Activated CD4-positive, alpha-beta memory T cell treated with anti-CD3 and anti-CD28 coated beads for 36 hours (primary cell): ENCODE measurements at regions of chr1 and their contacts with region 1.

Region 1: DNA sequence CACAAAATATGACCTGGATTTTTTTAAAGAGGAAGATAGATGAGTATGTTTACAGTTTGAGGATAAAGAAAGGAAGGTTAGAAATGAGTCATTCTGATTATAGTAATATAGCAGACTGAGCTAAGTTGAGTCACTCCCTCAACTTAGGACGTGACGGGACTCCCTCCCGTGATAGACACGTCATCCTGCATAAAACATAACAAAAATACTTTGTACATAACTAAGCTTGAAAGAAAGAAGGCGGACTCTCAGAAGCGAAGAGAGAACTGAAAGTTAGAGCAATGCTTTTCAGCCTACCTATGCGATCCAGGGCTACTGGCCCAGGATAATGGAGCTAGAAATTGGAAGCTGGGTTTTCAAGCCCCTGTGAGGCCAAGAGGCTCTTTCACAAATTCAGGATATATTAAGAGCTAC is 53.0 kb upstream of the DESI2 start:
- DNase-seq: peak; percentile 76
- H3K4me3 Mint-ChIP-seq: peak overlapping the region; percentile 70
- H3K27ac Mint-ChIP-seq: peak overlapping the region; percentile 88
- H3K4me1 Mint-ChIP-seq: peaks cover 24% of the 10 kb centered on the region
- H3K27me3 Mint-ChIP-seq: peaks cover 4% of the 10 kb centered on the region

Region 2: GRCh38 chr1:244319283-244320132 is 280.4 kb before region 1 on chr1:
- CTCF ChIA-PET with region 1: no interaction called
- POLR2A ChIA-PET with region 1: no interaction called
- intact Hi-C with region 1: loop called (anchors 2 kb)
- DNase-seq: peak; percentile 78
- H3K4me3 Mint-ChIP-seq: no peak overlapping the region
- H3K27ac Mint-ChIP-seq: peak overlapping the region; percentile 64
- H3K4me1 Mint-ChIP-seq: peaks cover 29% of the 10 kb centered on the region
- H3K27me3 Mint-ChIP-seq: no peaks in the 10 kb centered on the region

Region 3: GRCh38 chr1:244424649-244425334 is 175.2 kb before region 1 on chr1:
- CTCF ChIA-PET with region 1: no interaction called
- POLR2A ChIA-PET with region 1: no interaction called
- intact Hi-C with region 1: no loop called
- DNase-seq: no peak
- H3K4me3 Mint-ChIP-seq: no peak overlapping the region
- H3K27ac Mint-ChIP-seq: no peak overlapping the region
- H3K4me1 Mint-ChIP-seq: peaks cover 11% of the 10 kb centered on the region
- H3K27me3 Mint-ChIP-seq: no peaks in the 10 kb centered on the region

Region 4: GRCh38 chr1:244614113-244614836 is 14.3 kb after region 1 on chr1:
- CTCF ChIA-PET with region 1: interaction called, 10 read pairs
- POLR2A ChIA-PET with region 1: no interaction called
- intact Hi-C with region 1: no loop called
- DNase-seq: no peak
- H3K4me3 Mint-ChIP-seq: no peak overlapping the region
- H3K27ac Mint-ChIP-seq: no peak overlapping the region
- H3K4me1 Mint-ChIP-seq: no peaks in the 10 kb centered on the region
- H3K27me3 Mint-ChIP-seq: no peaks in the 10 kb centered on the region

Region 5: DNA sequence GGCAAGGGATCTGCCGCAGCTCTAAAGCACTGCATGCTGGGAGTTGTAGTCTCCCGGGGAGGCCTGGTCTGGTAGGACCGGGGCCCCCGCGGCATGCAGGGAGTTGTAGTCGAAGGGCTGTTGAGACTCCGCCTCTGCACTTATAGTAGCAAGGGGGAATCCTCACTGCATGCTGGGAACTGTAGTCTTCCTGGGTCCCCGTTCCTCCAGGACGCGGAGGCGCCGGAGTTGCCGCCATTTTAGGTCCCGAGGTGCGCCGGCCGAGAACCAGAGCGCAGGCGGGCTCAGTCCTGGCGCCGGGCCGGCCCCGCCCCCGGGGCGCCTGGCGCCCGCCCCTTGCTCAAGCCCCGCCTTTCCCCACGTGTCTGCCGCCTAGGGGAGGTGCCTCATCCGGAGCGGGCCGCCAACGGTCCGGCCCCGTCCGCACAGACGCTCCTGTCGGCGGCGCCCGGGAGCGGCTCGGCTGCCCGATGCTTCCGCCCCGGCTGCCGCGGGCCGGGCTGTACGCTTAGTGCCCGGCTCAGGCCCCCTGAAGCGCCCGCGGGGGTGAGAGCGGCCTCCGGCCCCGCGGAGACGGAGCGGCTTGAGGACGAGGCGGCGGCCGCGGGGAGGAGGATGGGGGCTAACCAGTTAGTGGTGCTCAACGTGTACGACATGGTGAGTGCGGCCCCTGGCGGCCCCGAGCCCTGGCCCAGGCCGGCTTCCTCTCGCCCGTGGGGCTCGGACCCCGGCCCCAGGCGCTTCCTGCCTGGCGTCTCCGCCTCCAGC is 52.9 kb after region 1 on chr1 and contains the start of gene DESI2:
- CTCF ChIA-PET with region 1: interaction called, 8 read pairs
- POLR2A ChIA-PET with region 1: interaction called, 7 read pairs
- intact Hi-C with region 1: loop called (anchors 1 kb)
- DNase-seq: peak; percentile 98
- H3K4me3 Mint-ChIP-seq: peak within 1 kb of the TSS; percentile 79
- H3K27ac Mint-ChIP-seq: peak within 1 kb of the TSS; percentile 79
- H3K4me1 Mint-ChIP-seq: peaks cover 22% of the 10 kb centered on the region
- H3K27me3 Mint-ChIP-seq: no peaks in the 10 kb centered on the region
- total RNA-seq, gene DESI2: 24.8 to 25.6 TPM

Region 6: GRCh38 chr1:244727871-244728474 is 128.0 kb after region 1 on chr1:
- CTCF ChIA-PET with region 1: interaction called, 5 read pairs
- POLR2A ChIA-PET with region 1: no interaction called
- intact Hi-C with region 1: loop called (anchors 5 kb)
- DNase-seq: no peak
- H3K4me3 Mint-ChIP-seq: no peak overlapping the region
- H3K27ac Mint-ChIP-seq: no peak overlapping the region
- H3K4me1 Mint-ChIP-seq: peaks cover 12% of the 10 kb centered on the region
- H3K27me3 Mint-ChIP-seq: peaks cover 22% of the 10 kb centered on the region

Region 7: GRCh38 chr1:244801246-244801645 is 201.3 kb after region 1 on chr1:
- CTCF ChIA-PET with region 1: interaction called, 172 read pairs
- POLR2A ChIA-PET with region 1: no interaction called
- intact Hi-C with region 1: loop called (anchors 1 kb)
- DNase-seq: peak; percentile 66
- H3K4me3 Mint-ChIP-seq: no peak overlapping the region
- H3K27ac Mint-ChIP-seq: no peak overlapping the region
- H3K4me1 Mint-ChIP-seq: peaks cover 2% of the 10 kb centered on the region
- H3K27me3 Mint-ChIP-seq: peaks cover 2% of the 10 kb centered on the region

Region 8: GRCh38 chr1:244970661-244971551 is 371.0 kb after region 1 on chr1:
- CTCF ChIA-PET with region 1: no interaction called
- POLR2A ChIA-PET with region 1: no interaction called
- intact Hi-C with region 1: loop called (anchors 1 kb)
- DNase-seq: peak; percentile 93
- H3K4me3 Mint-ChIP-seq: peak overlapping the region; percentile 89
- H3K27ac Mint-ChIP-seq: peak overlapping the region; percentile 98
- H3K4me1 Mint-ChIP-seq: peaks cover 18% of the 10 kb centered on the region
- H3K27me3 Mint-ChIP-seq: no peaks in the 10 kb centered on the region